Posterior cingulate gyrus (tissue), 11 donors: ENCODE measurements at regions of chr1 and their contacts with region 1.

Region 1: DNA sequence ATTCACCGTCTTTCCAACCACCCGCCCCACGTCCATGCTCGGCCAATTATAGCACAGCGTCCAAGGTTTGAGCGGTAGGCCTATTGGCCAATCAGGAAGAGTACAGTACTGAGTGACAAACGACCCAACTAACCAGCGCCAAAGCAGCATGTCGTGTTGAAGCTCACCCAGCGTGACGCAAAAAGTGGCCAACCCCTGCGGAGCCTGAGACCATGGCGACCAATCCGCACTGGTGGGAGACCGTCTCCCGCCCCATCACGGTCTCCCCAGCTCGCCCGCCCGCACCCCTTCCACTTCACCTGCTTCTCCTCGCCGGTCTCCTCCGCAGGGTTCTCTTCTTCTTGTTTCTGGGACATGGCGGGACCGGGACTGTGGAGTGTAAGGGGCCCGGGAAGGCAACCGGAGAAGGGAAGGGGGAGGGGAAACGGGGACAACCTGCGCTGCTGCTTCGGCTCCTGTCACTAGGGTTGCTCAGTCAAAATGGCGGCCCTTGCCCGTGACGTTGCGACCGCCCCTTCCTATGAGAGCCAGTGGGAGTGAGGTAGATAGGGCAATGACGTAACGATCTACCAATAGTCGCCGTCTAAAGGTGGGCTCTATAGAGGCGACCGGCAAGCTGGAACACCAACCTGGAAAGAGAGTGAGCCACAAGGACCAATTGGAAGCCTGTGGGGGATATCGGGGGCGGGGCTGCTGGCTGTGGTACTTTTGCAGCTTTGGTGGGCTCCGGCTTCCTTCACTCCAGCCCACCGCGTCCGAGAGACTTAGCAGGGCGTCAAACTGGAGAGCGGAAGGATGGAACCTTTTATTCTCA is at the start of gene ENSA:
- DNase-seq: peak; percentile 93 to 100 (median 97)

Region 2: DNA sequence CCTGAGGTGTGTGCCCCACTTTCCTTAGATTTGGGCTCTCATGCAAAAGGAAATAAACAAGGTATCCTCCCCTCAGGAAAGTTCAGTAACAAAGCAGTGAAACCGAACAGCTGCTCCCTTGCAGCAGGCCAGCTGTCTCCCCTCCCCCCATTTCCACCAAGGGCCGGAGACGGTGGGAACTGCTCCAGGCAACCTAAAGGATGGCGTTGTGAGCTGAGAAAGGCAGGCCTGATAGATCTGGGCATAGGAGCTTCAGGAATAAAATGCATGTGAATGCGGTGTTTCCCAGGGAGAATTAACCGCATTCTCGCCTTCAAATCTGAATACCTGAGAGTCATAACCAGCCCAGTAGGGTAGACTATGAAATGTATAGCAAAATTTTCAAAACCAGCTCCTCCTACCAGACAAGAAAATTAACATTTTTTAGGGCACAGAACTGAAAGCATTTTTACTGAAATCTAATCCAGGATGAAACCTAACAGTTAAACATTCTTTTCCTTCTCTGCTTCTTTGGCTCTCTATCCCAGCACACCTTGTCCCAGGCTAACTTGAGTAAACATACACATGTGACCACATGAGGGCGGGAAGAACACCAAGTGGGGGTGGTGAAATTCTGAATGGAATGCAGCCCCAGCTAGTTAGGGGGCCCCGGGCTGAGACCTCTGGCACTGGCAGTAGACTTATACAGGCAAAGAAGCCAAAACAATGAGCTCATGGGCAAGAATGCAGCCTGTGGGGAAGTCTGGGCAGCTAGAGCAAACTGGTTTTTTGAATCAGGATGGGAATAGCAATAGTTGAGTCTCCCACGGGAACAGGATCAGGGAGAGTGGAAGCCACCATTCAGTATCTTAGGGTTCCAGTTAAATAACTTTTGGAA is 61.4 kb before region 1 on chr1:
- intact Hi-C with region 1: no loop called
- DNase-seq: peak in 4 of 10 donors; percentile 25 to 85 (median 46)

Region 3: DNA sequence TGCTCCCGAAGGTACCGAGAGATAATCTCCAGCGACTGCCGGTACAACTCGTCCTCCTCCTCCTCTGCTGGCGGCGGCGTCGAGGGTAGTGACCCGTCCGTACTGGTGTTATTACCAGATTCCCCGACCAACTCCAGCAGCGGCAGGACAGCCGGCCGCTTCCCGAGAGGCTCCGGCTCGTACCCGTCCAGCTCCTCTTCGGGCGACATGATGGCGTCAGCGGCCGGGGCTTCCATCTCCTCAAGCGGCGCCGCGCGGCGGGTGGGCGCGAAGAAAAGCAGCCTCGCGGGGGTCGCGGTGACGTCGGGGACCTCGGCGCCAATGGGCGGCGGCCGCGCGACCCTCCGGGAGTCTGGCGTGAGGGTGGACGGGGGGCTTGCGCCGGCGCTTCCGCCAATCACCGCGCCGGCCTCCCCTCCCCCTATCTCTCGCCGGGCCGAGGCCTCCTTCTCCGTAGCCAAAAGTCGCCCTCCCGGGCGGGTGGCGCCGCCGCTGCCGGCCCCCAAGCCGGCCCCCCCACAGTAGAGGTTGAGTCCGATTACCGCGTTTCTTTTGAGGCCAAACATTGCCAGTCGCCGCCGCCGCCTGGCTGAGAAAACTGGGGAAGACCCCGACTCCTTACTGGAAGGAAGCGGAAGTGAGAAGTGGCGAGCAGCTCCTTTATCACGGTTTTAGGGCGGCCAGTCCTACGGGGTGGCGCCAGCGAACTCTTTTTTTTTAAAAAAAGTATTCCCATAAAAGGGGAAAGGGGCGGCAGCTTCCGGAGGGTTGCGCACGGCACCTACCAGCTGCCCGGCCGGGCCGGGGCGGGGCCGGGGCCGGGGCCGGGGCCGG is 50.1 kb before region 1 on chr1 and contains the start of gene MCL1:
- intact Hi-C with region 1: loop called (anchors 2 kb)
- DNase-seq: peak; percentile 80 to 98 (median 86)